Heart right ventricle (tissue), 16 donors: ENCODE measurements at regions of chr5 and their contacts with region 1.

Region 1: DNA sequence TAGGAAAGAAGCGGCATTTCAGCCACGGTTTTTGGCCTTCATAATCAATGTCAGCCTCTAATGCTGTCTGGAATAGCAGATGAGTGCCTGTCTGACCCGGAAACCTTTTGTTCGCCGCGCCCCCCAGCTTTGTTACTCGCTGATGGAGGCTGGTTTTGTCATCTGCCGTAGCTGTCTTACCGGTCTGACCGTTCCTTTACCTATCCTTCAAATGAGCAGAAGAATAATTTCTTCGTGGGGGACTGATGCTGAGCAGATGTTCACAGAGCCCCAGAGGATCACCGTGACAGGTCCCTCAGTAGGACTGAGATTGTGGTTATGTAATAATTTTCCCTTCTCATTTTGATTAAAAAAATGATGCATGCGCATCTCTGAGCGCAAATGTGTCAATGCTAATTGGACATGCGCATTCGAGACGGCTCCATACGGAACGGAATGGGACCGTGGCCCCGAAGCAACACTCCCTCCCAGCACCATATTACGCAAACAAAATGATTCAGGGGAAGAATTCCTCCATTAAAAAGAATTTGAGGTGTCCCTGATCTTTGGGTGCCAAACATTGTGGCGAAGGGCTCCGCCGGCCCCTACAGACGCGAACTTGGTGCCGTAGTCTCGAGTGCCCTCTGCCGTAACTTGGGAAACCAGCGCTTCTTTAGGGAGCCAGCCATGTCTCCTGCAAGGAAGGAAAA is 27.6 kb downstream of the TLX3 start:
- DNase-seq: peak in 1 of 2 donors; percentile 28
- ATAC-seq: peak in 6 of 8 donors; percentile 57 to 84 (median 70)
- H3K4me3 ChIP-seq: peak overlapping the region; percentile 15 to 52 (median 43)
- H3K27ac ChIP-seq: no peak overlapping the region
- H3K4me1 ChIP-seq: peaks cover 0 to 11% (median 8%) of the 10 kb centered on the region in 9 donors
- H3K27me3 ChIP-seq: peaks cover 0 to 96% (median 65%) of the 10 kb centered on the region in 7 donors
- CTCF ChIP-seq: peak; percentile 41 to 77 (median 63)

Region 2: GRCh38 chr5:170434966-170435605 is 901.6 kb before region 1 on chr5:
- intact Hi-C with region 1: loop called in 1 of 10 experiments (anchors 10 kb)
- DNase-seq: peak; percentile 43 to 70
- ATAC-seq: peak; percentile 77 to 88 (median 87)
- H3K4me3 ChIP-seq: no peak overlapping the region
- H3K27ac ChIP-seq: no peak overlapping the region
- H3K4me1 ChIP-seq: no peaks in the 10 kb centered on the region
- H3K27me3 ChIP-seq: peaks cover 0 to 10% (median 0%) of the 10 kb centered on the region in 7 donors
- CTCF ChIP-seq: peak; percentile 95 to 99 (median 98)

Region 3: GRCh38 chr5:170648541-170648940 is 688.1 kb before region 1 on chr5:
- intact Hi-C with region 1: loop called in 1 of 10 experiments (anchors 10 kb)
- DNase-seq: no peak
- ATAC-seq: no peak
- H3K4me3 ChIP-seq: no peak overlapping the region
- H3K27ac ChIP-seq: no peak overlapping the region
- H3K4me1 ChIP-seq: peaks cover 0 to 2% (median 0%) of the 10 kb centered on the region in 9 donors
- H3K27me3 ChIP-seq: peaks cover 0 to 3% (median 0%) of the 10 kb centered on the region in 7 donors
- CTCF ChIP-seq: no peak

Region 4: GRCh38 chr5:170747851-170748250 is 588.8 kb before region 1 on chr5:
- intact Hi-C with region 1: loop called in 8 of 10 experiments (anchors 5 to 10 kb)
- DNase-seq: peak; percentile 25 to 40
- ATAC-seq: peak in 7 of 8 donors; percentile 2 to 47 (median 18)
- H3K4me3 ChIP-seq: no peak overlapping the region
- H3K27ac ChIP-seq: peak overlapping the region; percentile 46 to 92 (median 86)
- H3K4me1 ChIP-seq: peaks cover 18 to 87% (median 71%) of the 10 kb centered on the region in 9 donors
- H3K27me3 ChIP-seq: peaks cover 0 to 21% (median 0%) of the 10 kb centered on the region in 7 donors
- CTCF ChIP-seq: peak in 8 of 9 donors; percentile 23 to 64 (median 52)

Region 5: GRCh38 chr5:171207256-171207847 is 129.3 kb before region 1 on chr5:
- intact Hi-C with region 1: loop called in 9 of 10 experiments (anchors 1 to 10 kb)
- DNase-seq: no peak
- ATAC-seq: no peak
- H3K4me3 ChIP-seq: no peak overlapping the region
- H3K27ac ChIP-seq: no peak overlapping the region
- H3K4me1 ChIP-seq: no peaks in the 10 kb centered on the region
- H3K27me3 ChIP-seq: peaks cover 0 to 3% (median 0%) of the 10 kb centered on the region in 7 donors
- CTCF ChIP-seq: peak; percentile 19 to 69 (median 55)

Region 6: DNA sequence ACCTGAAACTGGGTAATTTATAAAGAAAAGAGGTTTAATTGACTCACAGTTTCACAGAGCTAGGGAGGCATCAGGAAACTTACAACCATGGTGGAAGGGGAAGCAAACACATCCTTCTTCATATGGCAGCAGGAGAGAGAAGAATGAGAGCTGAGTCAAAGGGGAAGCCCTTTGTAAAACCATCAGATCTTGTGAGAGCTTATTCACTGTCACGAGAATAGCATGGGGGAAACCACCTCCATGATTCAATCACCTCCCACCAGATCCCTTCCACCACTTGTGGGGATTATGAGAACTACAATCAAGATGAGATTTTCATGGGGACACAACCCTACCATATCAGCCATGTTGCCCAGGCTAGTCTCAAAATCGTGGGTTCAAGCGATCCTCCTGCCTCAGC is 226.2 kb after region 1 on chr5:
- intact Hi-C with region 1: no loop called
- DNase-seq: no peak
- ATAC-seq: no peak
- H3K4me3 ChIP-seq: no peak overlapping the region
- H3K27ac ChIP-seq: no peak overlapping the region
- H3K4me1 ChIP-seq: no peaks in the 10 kb centered on the region
- H3K27me3 ChIP-seq: no peaks in the 10 kb centered on the region
- CTCF ChIP-seq: no peak